GM13977 (cell line): ENCODE measurements at regions of chr3 and their contacts with region 1.

Region 1: DNA sequence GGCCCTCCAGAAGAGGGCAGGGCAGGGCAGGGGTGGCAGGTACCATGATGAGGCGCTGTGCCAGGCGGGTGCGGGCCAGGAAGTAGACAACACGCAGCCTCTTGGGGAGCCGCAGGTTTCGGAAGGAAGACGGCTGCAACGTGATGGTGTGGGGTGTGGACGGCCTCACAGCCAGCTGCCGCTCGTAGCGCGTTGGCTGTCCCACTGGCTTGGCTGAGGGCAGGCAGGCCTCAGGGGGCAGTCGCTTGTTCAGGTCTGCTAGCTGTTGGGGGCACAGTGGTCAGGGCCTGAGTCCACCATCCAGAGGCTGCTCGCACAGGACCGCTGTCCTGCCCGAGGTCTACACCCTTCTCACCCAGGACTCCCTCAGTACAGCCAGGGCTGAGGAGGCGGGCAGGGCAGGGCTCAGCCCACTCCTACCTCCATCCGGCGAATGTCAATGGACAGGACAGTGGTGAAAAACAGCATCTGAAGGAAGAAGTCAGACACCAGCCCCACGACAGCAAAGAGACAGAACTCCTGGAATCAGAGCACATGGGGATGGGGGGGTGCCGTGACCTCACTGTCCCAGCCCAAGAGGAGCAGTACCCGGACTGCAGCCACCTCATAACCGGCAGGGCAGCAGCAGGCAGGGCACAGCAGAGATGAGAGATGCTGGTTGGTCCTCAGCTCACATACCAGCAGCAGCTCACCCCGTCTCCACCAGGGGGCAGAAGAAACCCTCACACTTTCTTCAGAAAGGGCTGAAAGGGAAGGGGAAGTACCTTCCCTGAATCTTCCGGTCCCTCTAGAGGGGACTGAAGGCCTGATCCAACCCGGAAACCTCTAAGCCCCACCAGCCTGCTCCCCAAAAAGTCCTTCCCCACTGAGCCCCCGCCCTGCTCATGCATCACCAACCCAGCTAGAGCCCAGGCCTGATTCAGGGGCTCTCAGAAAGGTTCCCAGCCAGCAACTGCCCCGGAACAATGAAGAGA is 40.0 kb downstream of the PTPN23 start:
- DNase-seq: peak; percentile 94
- CTCF ChIP-seq: peak; percentile 91

Region 2: DNA sequence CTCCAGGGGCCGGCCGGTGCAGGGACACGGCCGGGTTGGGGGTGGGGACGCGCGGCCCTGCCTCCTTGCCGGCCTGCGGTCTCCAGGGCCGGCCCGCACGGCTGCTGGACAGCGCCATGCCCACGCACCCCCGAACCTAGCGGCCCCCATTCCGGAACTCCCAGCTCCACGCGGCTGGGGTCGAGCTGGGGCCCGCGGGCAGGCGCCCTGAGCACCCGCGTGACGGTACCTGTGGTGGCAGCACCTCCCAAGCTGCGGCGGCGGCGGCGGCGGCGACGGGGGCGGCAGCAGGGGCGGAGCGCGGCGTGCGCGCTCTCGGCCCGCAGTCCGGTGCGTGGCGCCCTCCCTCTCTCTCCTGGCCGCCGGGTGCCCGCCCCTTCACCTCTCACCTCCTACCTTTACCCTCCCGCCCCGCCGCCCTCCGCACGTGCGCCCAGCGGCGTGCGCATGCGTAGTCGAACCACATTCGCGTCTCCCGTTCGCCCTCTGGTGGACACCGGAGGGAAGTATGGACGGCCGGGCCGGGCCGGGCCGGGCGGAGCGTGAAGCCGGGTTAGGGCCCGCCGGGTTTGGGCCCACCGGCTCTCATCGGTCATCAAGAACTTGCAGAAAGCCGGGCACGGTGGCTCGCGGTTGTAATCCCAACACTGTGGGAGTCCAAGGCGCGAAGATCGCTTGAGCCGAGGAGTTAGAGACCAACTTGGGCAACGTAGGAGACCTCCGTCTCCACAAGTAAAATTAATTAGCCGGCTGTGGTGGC is 55.0 kb after region 1 on chr3 and contains the start of gene SCAP:
- in situ Hi-C with region 1: loop called (anchors 10 kb)
- DNase-seq: peak; percentile 96
- CTCF ChIP-seq: peak; percentile 90

Region 3: DNA sequence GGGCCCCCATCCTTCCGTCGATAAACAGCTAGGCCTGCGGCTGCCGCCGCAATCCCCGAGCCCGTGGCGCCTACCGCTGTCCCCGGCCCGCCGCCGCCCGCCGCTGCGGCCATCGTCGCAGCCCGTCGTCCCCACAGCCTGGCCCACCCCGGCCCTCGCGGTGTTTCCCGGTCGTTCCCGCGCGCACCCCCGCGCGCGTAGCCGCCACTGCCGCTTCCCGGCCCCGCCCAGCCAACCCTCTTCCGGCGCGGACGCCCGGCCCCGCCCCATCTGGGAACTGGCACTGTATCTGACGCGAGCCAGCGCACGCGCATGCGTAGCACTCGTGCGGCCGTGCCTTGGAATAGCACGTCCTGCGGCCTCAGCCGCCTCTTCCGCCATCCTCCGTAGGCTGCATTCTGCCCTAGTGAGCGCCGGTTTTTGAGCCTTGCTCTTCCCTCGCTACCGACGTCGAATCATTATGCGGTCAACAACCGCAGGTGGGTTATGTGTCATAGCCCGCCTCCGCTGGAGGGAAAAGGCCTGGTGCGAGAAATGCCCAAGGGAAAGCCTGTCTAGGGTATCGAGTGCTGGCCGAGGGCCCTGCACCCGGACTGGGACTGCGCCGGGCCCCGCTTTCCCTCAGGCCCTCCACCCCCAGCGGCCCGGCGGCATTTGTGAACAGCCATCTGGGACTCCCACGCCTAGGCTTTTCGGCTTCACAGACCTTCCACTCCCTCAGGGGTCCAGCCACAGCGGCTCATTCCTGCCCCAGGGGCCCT is 361.1 kb after region 1 on chr3 and contains the start of gene SMARCC1:
- in situ Hi-C with region 1: loop called (anchors 25 kb)
- DNase-seq: peak; percentile 97
- CTCF ChIP-seq: no peak